ENCODE measurements at regions of chr5 and their contacts with region 1.

Region 1: DNA sequence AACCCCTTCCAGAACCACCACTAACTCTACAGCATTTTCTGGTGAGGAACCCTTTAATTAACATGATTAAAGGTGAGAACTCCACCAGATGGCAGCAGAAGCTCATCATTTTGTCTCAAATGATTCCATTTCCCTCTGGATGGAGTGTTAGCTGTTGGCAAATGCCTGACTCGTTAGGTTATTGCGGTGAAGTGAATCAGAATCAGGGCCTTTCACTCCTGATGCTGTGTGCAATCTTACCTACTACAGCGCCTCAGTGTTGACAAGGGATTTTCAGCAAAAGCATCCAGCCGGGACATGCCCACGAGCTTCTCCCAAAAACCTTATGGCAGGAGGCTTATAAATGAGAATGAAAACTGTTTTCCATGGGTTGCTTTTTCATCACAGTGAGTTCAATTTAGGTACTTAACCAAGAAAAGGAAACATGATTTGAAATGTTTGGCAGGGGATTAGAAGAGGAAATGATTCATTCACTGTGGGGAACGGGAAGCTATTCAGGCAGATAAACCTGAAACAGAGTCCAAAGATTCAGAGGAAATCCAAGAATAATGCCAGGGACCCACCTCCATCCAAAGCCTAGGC is 48.0 kb upstream of the CAST start:
- DNase-seq: peak in 5 of 10 donors; percentile 40 to 70 (median 43)
- H3K4me3 ChIP-seq: peak overlapping the region in 31 of 59 donors; percentile 3 to 50 (median 27)
- H3K27ac ChIP-seq: peak overlapping the region in 42 of 59 donors; percentile 0 to 80 (median 48)
- H3K27me3 ChIP-seq: no peaks in the 10 kb centered on the region
- CTCF ChIP-seq: peak in 55 of 56 donors; percentile 63 to 96 (median 79)

Region 2: GRCh38 chr5:95846554-95847260 is 767.5 kb before region 1 on chr5:
- intact Hi-C with region 1: no loop called
- DNase-seq: peak in 8 of 10 donors; percentile 61 to 85 (median 78)
- H3K4me3 ChIP-seq: no peak overlapping the region
- H3K27ac ChIP-seq: peak overlapping the region in 29 of 59 donors; percentile 2 to 87 (median 33)
- H3K27me3 ChIP-seq: no peaks in the 10 kb centered on the region
- CTCF ChIP-seq: peak; percentile 95 to 100 (median 98)

Region 3: GRCh38 chr5:96687812-96688453 is 73.7 kb after region 1 on chr5:
- intact Hi-C with region 1: loop called (anchors 2 kb)
- DNase-seq: no peak
- H3K4me3 ChIP-seq: peak overlapping the region in 20 of 59 donors; percentile 0 to 43 (median 15)
- H3K27ac ChIP-seq: peak overlapping the region in 2 of 59 donors; percentile 3 to 19
- H3K27me3 ChIP-seq: no peaks in the 10 kb centered on the region
- CTCF ChIP-seq: peak; percentile 27 to 74 (median 61)

Region 4: DNA sequence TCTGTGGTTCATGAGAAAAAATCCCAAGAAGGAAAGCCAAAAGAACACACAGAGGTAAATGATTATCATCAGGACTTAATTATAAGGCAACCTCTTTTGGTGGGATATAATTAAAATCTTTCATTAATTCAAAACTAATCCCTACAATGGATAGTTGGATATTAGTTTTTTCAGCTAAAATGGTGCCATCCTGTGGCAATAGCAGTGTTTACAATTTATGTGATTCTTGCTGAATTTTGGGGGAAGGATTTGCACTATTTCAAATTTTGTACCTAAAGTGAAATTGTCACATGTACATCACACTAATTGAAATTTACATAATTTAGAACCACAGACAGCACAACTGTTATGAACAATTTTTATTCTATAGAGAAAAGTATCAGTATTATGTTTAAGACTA is 115.0 kb after region 1 on chr5:
- intact Hi-C with region 1: loop called in 1 of 2 experiments (anchors 2 kb)
- DNase-seq: no peak
- H3K4me3 ChIP-seq: no peak overlapping the region
- H3K27ac ChIP-seq: no peak overlapping the region
- H3K27me3 ChIP-seq: no peaks in the 10 kb centered on the region
- CTCF ChIP-seq: peak in 53 of 56 donors; percentile 26 to 73 (median 51)